ENCODE measurements at regions of chr6 and their contacts with region 1.

Region 1: GRCh38 chr6:164063346-164063745 is 648.8 kb downstream of the QKI start:
- DNase-seq: no peak
- ATAC-seq: no peak

Region 2: GRCh38 chr6:164039954-164040375 is 23.4 kb before region 1 on chr6:
- intact Hi-C with region 1: loop called in 1 of 2 experiments (anchors 2 kb)
- DNase-seq: peak; percentile 45
- ATAC-seq: peak; percentile 31 to 65

Region 3: GRCh38 chr6:164097557-164098398 is 34.4 kb after region 1 on chr6:
- intact Hi-C with region 1: no loop called
- DNase-seq: no peak
- ATAC-seq: peak; percentile 48 to 75

Region 4: GRCh38 chr6:164322533-164322932 is 259.2 kb after region 1 on chr6:
- intact Hi-C with region 1: no loop called
- DNase-seq: no peak
- ATAC-seq: peak; percentile 53 to 94

Measured in left cardiac atrium (tissue), 4 donors.